ENCODE measurements at regions of chr11 and their contacts with region 1.

Region 1: DNA sequence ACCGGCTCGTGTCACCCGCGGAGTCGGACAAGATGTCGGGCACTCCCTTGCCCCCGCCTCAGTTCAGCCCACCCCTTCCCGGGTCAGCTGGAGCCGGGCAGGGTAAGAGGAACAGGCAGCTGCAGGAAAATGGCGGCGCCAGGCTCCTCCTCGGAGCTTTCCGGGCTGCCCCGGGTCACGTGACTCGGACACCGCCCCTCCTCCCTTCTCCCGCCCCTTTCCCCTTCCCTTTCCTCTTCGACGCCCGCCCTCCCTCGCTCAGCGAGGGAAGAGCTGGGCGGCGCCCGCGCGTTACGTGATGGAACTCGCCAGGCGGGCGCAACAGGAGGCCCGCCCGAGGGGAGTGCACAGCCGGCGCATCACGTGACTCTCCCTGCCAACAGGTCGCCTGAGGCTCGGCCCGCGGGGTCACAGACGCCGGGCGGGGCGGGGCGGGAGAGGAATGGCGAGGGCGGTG is at the start of gene PICALM:
- DNase-seq: peak; percentile 97
- ATAC-seq: peak; percentile 80
- H3K4me3 ChIP-seq: peak within 1 kb of the TSS; percentile 95
- H3K27ac ChIP-seq: peak within 1 kb of the TSS; percentile 99
- H3K4me1 ChIP-seq: peaks cover 10% of the 10 kb centered on the region
- H3K27me3 ChIP-seq: no peaks in the 10 kb centered on the region
- CTCF ChIP-seq: no peak
- EP300 ChIP-seq: peak in 1 of 2 experiments; percentile 14; a peak in 1 of 4 replicates
- POLR2A ChIP-seq: peak; percentile 81
- RAD21 ChIP-seq: no peak
- polyA plus RNA-seq, gene PICALM: 4.3 to 10.4 TPM

Region 2: DNA sequence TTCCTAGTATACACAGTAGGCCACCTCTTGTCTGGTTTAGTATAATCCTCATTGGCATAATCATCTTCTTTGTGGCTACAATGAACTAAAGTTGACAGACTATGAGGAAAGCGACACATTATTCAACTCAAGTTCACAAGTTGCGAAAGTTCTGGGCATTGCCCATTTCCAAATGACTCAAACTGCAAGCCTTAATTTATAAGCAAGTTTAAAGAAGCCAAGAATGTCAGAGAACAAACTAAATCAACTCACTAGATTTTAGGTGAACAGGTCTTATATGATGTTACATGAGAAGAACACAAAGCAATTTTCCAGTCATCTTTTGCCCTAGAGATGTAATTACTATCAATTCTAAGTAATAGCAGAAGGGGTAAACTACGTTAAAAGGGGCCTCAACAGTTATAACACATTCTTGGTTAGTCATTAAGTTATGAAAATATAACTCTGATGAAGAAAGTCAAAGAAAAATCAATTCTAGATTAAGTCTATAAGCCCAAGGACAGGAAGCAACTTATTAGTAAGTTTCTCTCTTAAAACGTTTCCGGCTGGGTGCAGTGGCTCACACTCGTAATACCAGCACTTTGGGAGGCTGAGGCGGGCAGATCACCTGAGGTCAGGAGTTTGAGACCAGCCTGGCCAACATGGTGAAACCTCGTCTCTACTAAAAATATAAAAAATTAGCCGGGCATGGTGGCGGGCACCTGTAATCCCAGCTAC is 21.5 kb before region 1 on chr11:
- CTCF ChIA-PET with region 1: interaction called, 41 read pairs
- POLR2A ChIA-PET with region 1: interaction called, 20 read pairs
- RAD21 ChIA-PET with region 1: interaction called, 57 read pairs
- SMC1A ChIA-PET with region 1: interaction called, 91 read pairs
- in situ Hi-C with region 1: no loop called
- intact Hi-C with region 1: loop called (anchors 1 kb)
- DNase-seq: no peak
- ATAC-seq: peak; percentile 69
- H3K4me3 ChIP-seq: peak overlapping the region; percentile 40; the same call in 1 of the 2 replicates
- H3K27ac ChIP-seq: peak overlapping the region; percentile 49
- H3K4me1 ChIP-seq: peaks cover 45% of the 10 kb centered on the region
- H3K27me3 ChIP-seq: no peaks in the 10 kb centered on the region
- CTCF ChIP-seq: no peak
- EP300 ChIP-seq: no peak; a peak in 1 of 4 replicates
- POLR2A ChIP-seq: no peak
- RAD21 ChIP-seq: no peak

Region 3: GRCh38 chr11:86116386-86116726 is 47.4 kb after region 1 on chr11:
- CTCF ChIA-PET with region 1: interaction called, 45 read pairs
- POLR2A ChIA-PET with region 1: interaction called, 40 read pairs
- RAD21 ChIA-PET with region 1: interaction called, 57 read pairs
- SMC1A ChIA-PET with region 1: interaction called, 75 read pairs
- in situ Hi-C with region 1: no loop called
- intact Hi-C with region 1: loop called (anchors 1 kb)
- DNase-seq: peak; percentile 77
- ATAC-seq: peak; percentile 94
- H3K4me3 ChIP-seq: 0 out of 2 replicates have a peak overlapping the region, but pooled peaks have one; percentile 37
- H3K27ac ChIP-seq: peak overlapping the region; percentile 90
- H3K4me1 ChIP-seq: peaks cover 18% of the 10 kb centered on the region
- H3K27me3 ChIP-seq: no peaks in the 10 kb centered on the region
- CTCF ChIP-seq: no peak
- EP300 ChIP-seq: peak; percentile 79; a peak in 2 of 4 replicates
- POLR2A ChIP-seq: no peak
- RAD21 ChIP-seq: no peak

Region 4: DNA sequence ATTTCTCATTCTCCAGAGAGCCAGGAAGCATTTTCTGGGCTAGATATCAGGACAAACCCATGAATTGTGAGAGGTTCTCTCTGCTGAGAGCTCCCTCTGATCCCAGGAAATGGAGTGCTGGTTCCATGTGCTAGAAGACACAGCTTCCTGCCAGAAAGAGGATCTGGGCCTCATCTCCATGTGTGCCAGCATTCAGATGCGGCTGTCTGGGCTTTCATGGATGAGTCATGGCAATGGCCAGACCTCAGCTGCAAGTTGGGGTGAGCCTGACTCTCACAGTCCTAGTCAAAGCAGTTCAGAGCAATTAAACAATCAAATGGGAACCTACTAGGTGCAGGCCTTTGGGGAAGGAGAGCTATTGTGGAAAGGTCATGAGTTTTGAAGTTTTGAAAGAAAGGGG is 93.3 kb after region 1 on chr11:
- CTCF ChIA-PET with region 1: no interaction called
- POLR2A ChIA-PET with region 1: interaction called, 3 read pairs
- RAD21 ChIA-PET with region 1: interaction called, 7 read pairs
- SMC1A ChIA-PET with region 1: interaction called, 12 read pairs
- in situ Hi-C with region 1: no loop called
- intact Hi-C with region 1: no loop called
- DNase-seq: no peak
- ATAC-seq: peak; percentile 29; the same call in 2 of the 3 replicates
- H3K4me3 ChIP-seq: no peak overlapping the region
- H3K27ac ChIP-seq: no peak overlapping the region
- H3K4me1 ChIP-seq: peaks cover 22% of the 10 kb centered on the region
- H3K27me3 ChIP-seq: no peaks in the 10 kb centered on the region
- CTCF ChIP-seq: no peak
- EP300 ChIP-seq: no peak
- POLR2A ChIP-seq: no peak
- RAD21 ChIP-seq: no peak

Region 5: DNA sequence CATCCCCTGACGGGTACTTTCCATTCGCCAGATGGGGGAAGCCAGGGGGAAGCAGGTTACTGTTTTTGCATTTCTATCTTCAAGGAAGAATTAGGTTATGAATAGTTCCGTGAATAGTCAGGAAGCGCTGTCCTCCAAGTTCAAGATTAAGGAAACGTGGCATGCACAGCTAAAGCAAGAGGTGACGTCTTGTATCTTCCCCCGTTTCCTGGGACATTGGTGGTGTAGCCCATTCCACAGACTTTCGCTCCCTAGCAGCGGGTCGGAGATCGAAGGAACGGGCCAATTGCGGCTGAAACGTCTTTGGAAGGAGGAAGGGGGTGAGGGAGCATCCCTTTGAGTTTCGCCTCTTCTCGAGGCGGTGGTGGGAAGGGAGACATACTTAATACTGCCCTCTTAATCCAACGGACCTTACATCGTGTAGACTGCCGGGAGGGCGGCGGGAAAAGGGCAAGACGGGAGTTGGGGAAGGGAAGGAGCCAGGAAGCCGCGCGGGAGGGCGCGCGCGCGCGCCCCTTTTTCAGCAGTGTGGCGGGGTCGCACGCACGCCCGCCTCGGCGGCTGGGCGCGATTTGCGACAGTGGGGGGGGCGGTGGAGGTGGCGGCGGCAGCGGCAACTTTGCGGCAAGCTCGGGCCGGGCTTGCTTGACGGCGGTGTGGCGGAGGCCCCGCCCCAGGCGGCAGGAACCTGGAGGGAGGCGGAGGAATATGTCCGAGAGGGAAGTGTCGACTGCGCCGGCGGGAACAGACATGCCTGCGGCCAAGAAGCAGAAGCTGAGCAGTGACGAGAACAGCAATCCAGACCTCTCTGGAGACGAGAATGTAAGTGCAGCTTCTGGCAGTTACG is 175.8 kb after region 1 on chr11 and contains the start of gene EED:
- CTCF ChIA-PET with region 1: interaction called, 5 read pairs
- POLR2A ChIA-PET with region 1: interaction called, 3 read pairs
- RAD21 ChIA-PET with region 1: interaction called, 10 read pairs
- SMC1A ChIA-PET with region 1: interaction called, 18 read pairs
- in situ Hi-C with region 1: no loop called
- intact Hi-C with region 1: loop called (anchors 2 kb)
- DNase-seq: peak; percentile 86
- ATAC-seq: peak; percentile 77
- H3K4me3 ChIP-seq: peak within 1 kb of the TSS; percentile 81
- H3K27ac ChIP-seq: peak within 1 kb of the TSS; percentile 98
- H3K4me1 ChIP-seq: peaks cover 12% of the 10 kb centered on the region
- H3K27me3 ChIP-seq: no peaks in the 10 kb centered on the region
- CTCF ChIP-seq: no peak
- EP300 ChIP-seq: peak in 1 of 2 experiments; percentile 25; a peak in 1 of 4 replicates
- POLR2A ChIP-seq: peak; percentile 80
- RAD21 ChIP-seq: no peak
- polyA plus RNA-seq, gene EED: 101 to 140 TPM

Measured in GM12878 (cell line).